ENCODE measurements at regions of chr16 and their contacts with region 1.

Region 1: DNA sequence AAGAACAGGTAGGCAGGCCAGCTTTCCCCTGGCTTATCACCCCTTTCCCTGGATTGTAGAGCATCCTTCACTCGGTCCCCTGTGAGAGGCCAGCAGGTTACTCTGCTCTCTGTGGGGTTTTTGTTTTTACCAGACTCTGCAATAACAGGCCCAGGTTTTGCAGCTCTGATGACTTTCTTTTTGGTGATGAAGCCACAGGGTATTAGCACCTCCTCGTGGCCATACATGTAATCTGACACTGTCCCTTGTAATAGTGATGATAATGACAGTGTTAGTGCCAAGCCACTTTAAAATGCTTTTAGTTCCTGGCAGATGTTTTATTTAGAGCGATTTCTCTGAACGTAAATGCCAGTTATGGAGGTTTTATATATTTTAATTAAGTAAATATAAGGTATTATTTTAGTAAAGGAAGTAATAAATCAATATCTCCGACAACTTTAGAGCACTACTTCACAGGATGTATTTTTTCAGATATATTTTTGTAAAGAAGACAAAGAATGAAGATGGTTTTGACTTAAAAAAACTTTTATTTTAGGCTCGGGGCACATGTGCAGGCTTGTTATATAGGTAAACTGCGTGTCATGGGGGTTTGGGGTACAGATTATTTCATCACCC is 38.0 kb upstream of the CPHXL start:
- DNase-seq: no peak
- ATAC-seq: peak; percentile 92

Region 2: DNA sequence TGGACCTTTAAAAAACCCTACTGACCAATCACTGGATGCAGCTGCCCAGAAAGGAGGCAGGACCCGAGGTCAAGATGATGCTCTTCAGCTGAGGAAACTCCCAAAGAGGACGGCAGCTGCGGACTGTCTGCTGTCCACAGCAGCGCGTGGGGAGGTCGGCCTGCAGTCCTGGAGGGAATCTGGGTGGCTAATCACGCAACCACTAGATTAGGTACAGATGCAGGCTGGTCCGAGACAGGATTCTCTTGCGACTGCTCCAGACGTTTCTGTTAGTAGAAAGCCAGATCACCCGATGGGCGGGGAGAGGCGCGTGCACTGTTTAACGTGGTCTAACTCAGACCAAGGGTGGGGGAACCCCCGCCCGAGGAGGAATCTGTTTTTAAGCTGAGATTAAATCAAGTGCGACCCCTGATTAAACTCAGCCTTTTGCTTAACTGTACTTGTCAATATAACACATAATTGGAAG is 566.1 kb before region 1 on chr16:
- intact Hi-C with region 1: loop called (anchors 10 kb)
- DNase-seq: peak; percentile 54
- ATAC-seq: no peak

Region 3: GRCh38 chr16:75478074-75478473 is 286.2 kb before region 1 on chr16:
- intact Hi-C with region 1: loop called (anchors 5 kb)
- DNase-seq: no peak
- ATAC-seq: peak; percentile 32